Dendritic cell treated with granulocyte-macrophage colony-stimulating factor and Interleukin-4, amounts not matched to agents 40 ng/mL and 50 ng/mL, for 4 days (primary cell): ENCODE measurements at regions of chr5 and their contacts with region 1.

Region 1: DNA sequence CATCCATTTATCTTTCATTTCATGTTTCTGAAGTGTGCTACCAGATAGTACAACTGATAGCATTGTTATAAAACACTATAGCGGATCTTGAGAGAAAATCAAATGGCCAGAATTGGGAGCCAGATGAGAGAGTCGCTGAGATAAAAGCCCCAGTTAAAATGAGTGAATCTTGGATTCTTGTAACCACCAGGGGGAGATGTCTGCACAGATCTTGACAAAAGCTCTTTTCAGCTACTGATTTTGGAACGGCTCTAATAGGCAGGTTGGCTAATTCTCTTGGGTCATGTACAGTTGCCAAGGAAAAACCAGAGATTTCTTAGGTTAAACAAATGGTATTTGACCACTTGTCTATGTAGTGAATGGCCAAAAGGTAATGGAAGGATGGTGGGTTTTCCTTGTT is 21.7 kb downstream of the F2RL2 start:
- H3K4me3 Mint-ChIP-seq: no peak overlapping the region
- H3K27ac Mint-ChIP-seq: no peak overlapping the region
- H3K4me1 Mint-ChIP-seq: peaks cover 25% of the 10 kb centered on the region
- H3K27me3 Mint-ChIP-seq: no peaks in the 10 kb centered on the region

Region 2: GRCh38 chr5:76029739-76030138 is 571.7 kb before region 1 on chr5:
- intact Hi-C with region 1: no loop called
- H3K4me3 Mint-ChIP-seq: no peak overlapping the region
- H3K27ac Mint-ChIP-seq: no peak overlapping the region
- H3K4me1 Mint-ChIP-seq: no peaks in the 10 kb centered on the region
- H3K27me3 Mint-ChIP-seq: peaks cover 14% of the 10 kb centered on the region

Region 3: DNA sequence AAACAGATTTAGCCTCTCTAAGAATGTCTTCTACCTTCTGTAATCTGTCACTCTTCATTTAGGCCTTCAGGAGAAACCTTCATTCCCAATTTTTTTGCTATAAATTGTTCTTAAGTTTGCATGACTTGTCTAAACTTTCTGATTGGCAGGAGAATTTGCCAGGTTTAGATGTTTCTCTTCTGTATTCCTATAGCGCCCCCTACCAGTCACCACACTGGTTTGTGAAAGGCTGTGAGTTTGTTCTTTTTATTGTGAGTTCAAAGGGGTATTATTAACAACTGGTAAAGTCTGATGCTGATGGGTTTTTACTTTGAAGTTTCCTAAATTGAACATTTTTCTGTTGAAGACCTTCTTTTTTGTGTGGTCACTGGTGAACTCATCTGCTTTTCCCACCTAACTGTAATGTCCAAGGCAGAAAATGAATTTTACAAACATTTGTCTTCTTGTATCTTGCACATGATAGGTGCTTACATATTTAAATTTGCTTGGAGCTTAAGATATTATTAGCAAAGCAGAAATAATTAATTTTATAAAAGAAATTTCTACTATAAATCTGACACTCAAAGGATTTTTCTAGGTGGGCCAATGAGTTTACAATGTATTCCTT is 40.1 kb after region 1 on chr5:
- intact Hi-C with region 1: loop called (anchors 1 kb)
- H3K4me3 Mint-ChIP-seq: no peak overlapping the region
- H3K27ac Mint-ChIP-seq: no peak overlapping the region
- H3K4me1 Mint-ChIP-seq: peaks cover 21% of the 10 kb centered on the region
- H3K27me3 Mint-ChIP-seq: no peaks in the 10 kb centered on the region

Region 4: DNA sequence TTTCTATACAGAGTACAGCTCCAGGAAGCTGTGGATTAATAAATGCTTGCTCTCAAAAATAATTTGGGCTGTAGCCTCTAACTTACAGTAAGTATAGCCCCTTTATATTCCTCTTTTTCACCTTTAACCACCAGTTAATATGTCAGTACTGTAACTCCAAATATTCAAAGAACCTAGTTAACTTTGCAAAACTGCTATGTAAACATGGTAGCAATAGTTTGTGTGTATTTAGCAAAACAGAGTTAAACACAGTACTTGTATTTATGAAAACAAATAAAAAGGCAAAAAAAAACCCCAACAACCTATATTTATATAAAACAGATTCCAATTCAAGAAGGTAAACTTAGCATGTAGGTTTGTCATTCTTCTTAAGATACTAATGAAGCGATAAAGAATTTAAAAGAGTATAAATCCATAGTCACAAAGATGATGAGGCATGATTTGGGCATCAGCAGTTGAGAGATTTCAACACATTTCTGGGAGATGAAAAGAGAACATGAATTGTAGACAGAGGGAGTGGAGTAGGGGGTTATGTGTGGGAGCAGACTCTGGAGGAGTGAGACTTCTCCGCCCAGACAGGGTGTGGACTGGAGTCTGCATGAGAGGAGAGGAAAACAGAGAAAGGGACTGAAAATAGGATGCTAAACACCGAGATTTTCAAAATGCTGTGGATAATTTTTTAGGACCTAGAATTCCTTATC is 170.4 kb after region 1 on chr5:
- intact Hi-C with region 1: loop called (anchors 1 kb)
- H3K4me3 Mint-ChIP-seq: no peak overlapping the region
- H3K27ac Mint-ChIP-seq: no peak overlapping the region
- H3K4me1 Mint-ChIP-seq: peaks cover 7% of the 10 kb centered on the region
- H3K27me3 Mint-ChIP-seq: no peaks in the 10 kb centered on the region